Heart left ventricle (tissue), 16 donors: ENCODE measurements at regions of chr19 and their contacts with region 1.

Region 1: GRCh38 chr19:43555185-43555770 is 20.0 kb downstream of the XRCC1 start:
- DNase-seq: peak in 4 of 5 donors; percentile 53 to 67 (median 58)
- ATAC-seq: peak in 3 of 4 donors; percentile 38 to 58 (median 50)
- H3K4me3 ChIP-seq: no peak overlapping the region
- H3K27ac ChIP-seq: no peak overlapping the region
- H3K4me1 ChIP-seq: no peaks in the 10 kb centered on the region
- H3K27me3 ChIP-seq: no peaks in the 10 kb centered on the region
- CTCF ChIP-seq: peak; percentile 45 to 70 (median 56)
- POLR2A ChIP-seq: no peak

Region 2: DNA sequence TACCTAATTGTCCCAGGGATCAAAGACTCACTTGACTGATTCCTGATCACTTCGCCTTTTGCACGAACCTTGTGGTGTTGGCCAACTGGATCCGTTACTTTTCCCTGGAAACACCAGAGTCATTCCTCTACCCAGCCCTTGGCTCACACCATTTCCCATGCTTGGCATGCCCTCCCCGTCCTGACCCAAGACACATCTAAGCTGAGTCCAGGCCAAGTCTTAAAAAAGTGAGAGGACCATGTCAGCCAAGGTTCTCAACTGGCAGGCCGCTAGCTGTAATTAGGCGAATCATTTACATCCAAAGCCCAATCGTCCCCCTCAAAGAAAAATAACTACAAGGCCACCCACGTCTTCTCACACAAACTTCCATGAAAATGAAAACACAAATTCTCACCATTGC is 103.2 kb after region 1 on chr19:
- intact Hi-C with region 1: loop called in 8 of 10 experiments (anchors 5 to 10 kb)
- DNase-seq: no peak
- ATAC-seq: no peak
- H3K4me3 ChIP-seq: no peak overlapping the region
- H3K27ac ChIP-seq: no peak overlapping the region
- H3K4me1 ChIP-seq: peaks cover 0 to 3% (median 0%) of the 10 kb centered on the region in 12 donors
- H3K27me3 ChIP-seq: no peaks in the 10 kb centered on the region
- CTCF ChIP-seq: no peak
- POLR2A ChIP-seq: no peak